CD8-positive, alpha-beta memory T cell (primary cell): ENCODE measurements at regions of chr6 and their contacts with region 1.

Region 1: DNA sequence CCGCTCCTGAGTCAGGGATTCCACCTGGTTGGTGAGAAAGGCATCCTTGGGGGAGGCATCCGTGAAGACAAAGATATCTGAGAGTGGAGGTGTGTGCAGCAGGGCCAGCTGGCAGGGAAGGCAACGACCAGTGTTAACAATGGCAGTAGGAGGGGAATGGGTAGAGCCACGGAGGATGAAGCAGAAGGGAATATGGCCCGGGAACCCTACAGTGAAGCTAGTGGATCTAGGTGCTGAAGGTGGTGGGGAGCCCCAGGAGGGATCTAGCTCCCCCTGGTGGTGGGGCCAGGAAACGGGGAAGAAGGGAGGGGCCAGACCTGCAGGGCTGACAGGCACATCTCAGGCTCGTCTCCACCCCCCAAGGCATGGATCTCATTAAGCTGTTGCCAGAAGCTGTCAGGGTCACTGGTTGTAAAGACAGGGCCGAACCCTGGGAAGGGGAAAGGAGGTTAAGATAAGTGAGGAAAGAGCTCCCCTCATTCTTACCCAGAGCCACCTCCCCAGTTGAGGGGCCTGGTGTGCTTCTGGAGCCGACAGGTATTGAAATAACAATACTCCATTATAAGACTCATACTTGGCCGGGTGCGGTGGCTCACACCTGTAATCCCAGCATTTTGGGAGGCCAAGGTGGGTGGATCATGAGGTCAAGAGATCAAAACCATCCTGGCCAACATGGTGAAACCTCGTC is 7.3 kb downstream of the VWA7 start:
- DNase-seq: peak; percentile 69 to 85 (median 74)
- H3K4me3 ChIP-seq: no peak overlapping the region
- H3K4me3 Mint-ChIP-seq: peak overlapping the region in 1 of 7 donors; percentile 63
- H3K27ac ChIP-seq: no peak overlapping the region
- H3K27ac Mint-ChIP-seq: peak overlapping the region in 6 of 8 donors; percentile 4 to 82 (median 67)
- H3K4me1 ChIP-seq: peaks cover 33% of the 10 kb centered on the region
- H3K4me1 Mint-ChIP-seq: peaks cover 22 to 29% (median 27%) of the 10 kb centered on the region in 3 donors
- H3K27me3 ChIP-seq: no peaks in the 10 kb centered on the region
- H3K27me3 Mint-ChIP-seq: no peaks in the 10 kb centered on the region

Region 2: DNA sequence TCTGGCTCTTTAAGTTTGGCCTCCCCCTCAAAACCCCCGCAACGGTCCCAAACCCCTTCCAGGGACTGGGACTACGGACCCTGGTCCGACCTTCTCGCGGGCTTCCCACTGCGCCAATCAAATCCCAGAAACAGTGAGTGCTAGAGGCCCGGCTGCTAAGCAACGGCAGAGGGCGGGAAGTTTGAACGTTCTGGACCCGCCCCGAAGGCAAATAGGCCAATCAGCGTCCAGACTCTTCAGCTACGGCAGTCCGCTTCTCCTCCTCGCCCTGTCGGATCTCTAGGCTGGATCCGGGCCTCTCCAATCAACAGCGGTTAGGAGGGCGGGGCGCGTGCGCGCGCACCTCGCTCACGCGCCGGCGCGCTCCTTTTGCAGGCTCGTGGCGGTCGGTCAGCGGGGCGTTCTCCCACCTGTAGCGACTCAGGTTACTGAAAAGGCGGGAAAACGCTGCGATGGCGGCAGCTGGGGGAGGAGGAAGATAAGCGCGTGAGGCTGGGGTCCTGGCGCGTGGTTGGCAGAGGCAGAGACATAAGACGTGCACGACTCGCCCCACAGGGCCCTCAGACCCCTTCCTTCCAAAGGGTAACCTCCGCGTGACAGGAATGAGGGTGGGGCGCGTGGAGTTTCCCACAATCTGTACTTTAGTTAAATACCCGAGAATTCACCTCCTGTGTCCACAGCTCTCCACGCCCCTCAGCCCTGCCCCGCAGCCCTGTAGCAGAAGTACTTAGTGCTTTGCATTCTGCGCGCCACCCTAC is 30.0 kb before region 1 on chr6 and contains the start of gene MSH5:
- CTCF ChIA-PET with region 1: interaction called, 42 read pairs
- POLR2A ChIA-PET with region 1: interaction called, 12 read pairs
- DNase-seq: peak; percentile 91 to 97 (median 93)
- H3K4me3 ChIP-seq: peak within 1 kb of the TSS; percentile 84
- H3K4me3 Mint-ChIP-seq: peak within 1 kb of the TSS; percentile 93 to 99 (median 98)
- H3K27ac ChIP-seq: peak within 1 kb of the TSS; percentile 98
- H3K27ac Mint-ChIP-seq: peak within 1 kb of the TSS; percentile 91 to 99 (median 96)
- H3K4me1 ChIP-seq: peaks cover 40% of the 10 kb centered on the region
- H3K4me1 Mint-ChIP-seq: peaks cover 46 to 62% (median 55%) of the 10 kb centered on the region in 3 donors
- H3K27me3 ChIP-seq: no peaks in the 10 kb centered on the region
- H3K27me3 Mint-ChIP-seq: no peaks in the 10 kb centered on the region
- total RNA-seq, gene MSH5: 36.4 to 39.8 TPM

Region 3: GRCh38 chr6:31780507-31781243 is 10.8 kb after region 1 on chr6:
- CTCF ChIA-PET with region 1: interaction called, 10 read pairs
- POLR2A ChIA-PET with region 1: interaction called, 3 read pairs
- DNase-seq: peak in 1 of 5 donors; percentile 37
- H3K4me3 ChIP-seq: no peak overlapping the region
- H3K4me3 Mint-ChIP-seq: no peak overlapping the region
- H3K27ac ChIP-seq: no peak overlapping the region
- H3K27ac Mint-ChIP-seq: peak overlapping the region in 1 of 8 donors; percentile 31
- H3K4me1 ChIP-seq: peaks cover 20% of the 10 kb centered on the region
- H3K4me1 Mint-ChIP-seq: peaks cover 15 to 21% (median 17%) of the 10 kb centered on the region in 3 donors
- H3K27me3 ChIP-seq: no peaks in the 10 kb centered on the region
- H3K27me3 Mint-ChIP-seq: no peaks in the 10 kb centered on the region

Region 4: DNA sequence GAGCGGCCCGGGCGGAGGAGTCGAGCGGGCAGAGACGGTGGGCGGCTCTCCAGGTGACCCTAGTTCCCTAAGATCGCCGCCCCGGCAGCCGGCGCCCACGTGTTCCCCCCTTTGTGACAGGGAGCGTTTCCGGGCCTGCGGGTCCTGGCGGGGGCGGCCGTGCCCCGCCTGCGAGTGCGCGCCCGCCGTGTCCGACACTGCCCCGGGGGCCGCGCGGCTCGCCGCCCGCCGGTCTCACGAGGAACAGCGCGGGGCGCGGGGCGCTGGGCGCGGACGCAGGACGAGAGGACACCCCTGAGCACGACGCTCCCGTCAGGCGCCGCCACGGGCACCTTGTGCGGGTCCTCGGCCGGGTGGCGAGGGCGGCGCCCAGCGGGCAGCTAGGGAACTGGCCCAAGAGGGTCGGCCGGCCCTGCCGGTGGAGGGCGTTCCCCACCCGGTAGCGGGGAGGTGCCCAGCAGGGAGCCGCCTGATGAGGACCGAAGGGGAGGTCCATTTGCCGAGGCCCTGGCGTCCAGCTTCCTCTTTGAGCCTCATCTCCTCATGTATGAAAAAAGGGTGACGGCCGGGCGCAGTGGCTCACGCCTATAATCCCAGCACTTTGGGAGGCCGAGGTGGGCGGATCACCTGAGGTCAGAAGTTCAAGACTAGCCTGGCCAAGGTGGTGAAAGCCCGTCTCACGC is 25.9 kb after region 1 on chr6 and contains the start of gene VARS1:
- CTCF ChIA-PET with region 1: interaction called, 13 read pairs
- POLR2A ChIA-PET with region 1: no interaction called
- DNase-seq: peak; percentile 77 to 90 (median 84)
- H3K4me3 ChIP-seq: peak within 1 kb of the TSS; percentile 82
- H3K4me3 Mint-ChIP-seq: peak within 1 kb of the TSS; percentile 89 to 99 (median 94)
- H3K27ac ChIP-seq: peak within 1 kb of the TSS; percentile 87
- H3K27ac Mint-ChIP-seq: peak within 1 kb of the TSS; percentile 85 to 99 (median 98)
- H3K4me1 ChIP-seq: peaks cover 46% of the 10 kb centered on the region
- H3K4me1 Mint-ChIP-seq: peaks cover 34 to 59% (median 40%) of the 10 kb centered on the region in 3 donors
- H3K27me3 ChIP-seq: no peaks in the 10 kb centered on the region
- H3K27me3 Mint-ChIP-seq: no peaks in the 10 kb centered on the region
- total RNA-seq, gene VARS1: 179 to 180 TPM

Region 5: DNA sequence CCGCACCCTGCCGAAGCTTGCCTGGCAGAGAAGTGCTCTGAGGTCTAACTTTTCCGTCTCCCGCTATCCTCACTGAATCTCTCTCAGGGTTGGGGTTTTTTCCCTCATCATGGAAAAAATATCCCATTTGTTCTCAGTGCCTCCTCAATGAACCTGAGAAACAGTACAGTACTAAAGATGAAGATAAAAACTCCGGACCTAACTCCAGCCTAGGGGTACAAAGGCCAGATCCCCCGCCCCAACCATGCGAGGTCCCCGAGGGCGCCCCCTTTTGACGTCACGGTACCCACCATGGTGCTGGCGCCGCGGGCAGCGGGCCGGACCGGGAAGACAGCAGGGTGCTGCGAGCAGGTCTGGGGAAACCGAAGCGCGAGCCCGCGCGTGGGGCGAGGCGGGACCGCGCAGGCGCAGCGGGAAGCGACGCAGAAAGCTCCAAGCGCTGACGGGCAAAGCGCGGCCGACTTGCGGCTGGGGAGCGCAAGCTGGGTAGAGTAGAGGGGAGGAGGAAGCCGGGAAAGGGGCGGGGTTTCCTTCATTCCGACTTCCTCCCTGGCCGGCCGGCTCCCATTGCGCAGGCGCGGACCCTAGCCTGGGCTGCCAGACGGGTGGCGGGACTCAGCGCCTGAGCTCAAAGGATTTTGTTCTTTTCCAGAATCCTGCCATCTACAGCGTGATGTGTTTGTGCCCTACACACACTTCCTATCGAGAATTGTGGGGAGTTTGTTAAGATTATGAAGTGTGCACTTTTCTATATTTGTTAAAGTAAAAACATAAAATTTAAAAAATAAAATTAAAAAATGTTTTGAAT is 36.8 kb after region 1 on chr6 and contains the start of gene LSM2:
- CTCF ChIA-PET with region 1: interaction called, 12 read pairs
- POLR2A ChIA-PET with region 1: no interaction called
- DNase-seq: peak; percentile 95 to 98 (median 97)
- H3K4me3 ChIP-seq: peak within 1 kb of the TSS; percentile 95
- H3K4me3 Mint-ChIP-seq: peak within 1 kb of the TSS; percentile 83 to 94 (median 91)
- H3K27ac ChIP-seq: peak within 1 kb of the TSS; percentile 93
- H3K27ac Mint-ChIP-seq: peak within 1 kb of the TSS; percentile 85 to 97 (median 94)
- H3K4me1 ChIP-seq: peaks cover 12% of the 10 kb centered on the region
- H3K4me1 Mint-ChIP-seq: peaks cover 17 to 45% (median 28%) of the 10 kb centered on the region in 3 donors
- H3K27me3 ChIP-seq: no peaks in the 10 kb centered on the region
- H3K27me3 Mint-ChIP-seq: no peaks in the 10 kb centered on the region
- total RNA-seq, gene LSM2: 160 to 172 TPM

Region 6: DNA sequence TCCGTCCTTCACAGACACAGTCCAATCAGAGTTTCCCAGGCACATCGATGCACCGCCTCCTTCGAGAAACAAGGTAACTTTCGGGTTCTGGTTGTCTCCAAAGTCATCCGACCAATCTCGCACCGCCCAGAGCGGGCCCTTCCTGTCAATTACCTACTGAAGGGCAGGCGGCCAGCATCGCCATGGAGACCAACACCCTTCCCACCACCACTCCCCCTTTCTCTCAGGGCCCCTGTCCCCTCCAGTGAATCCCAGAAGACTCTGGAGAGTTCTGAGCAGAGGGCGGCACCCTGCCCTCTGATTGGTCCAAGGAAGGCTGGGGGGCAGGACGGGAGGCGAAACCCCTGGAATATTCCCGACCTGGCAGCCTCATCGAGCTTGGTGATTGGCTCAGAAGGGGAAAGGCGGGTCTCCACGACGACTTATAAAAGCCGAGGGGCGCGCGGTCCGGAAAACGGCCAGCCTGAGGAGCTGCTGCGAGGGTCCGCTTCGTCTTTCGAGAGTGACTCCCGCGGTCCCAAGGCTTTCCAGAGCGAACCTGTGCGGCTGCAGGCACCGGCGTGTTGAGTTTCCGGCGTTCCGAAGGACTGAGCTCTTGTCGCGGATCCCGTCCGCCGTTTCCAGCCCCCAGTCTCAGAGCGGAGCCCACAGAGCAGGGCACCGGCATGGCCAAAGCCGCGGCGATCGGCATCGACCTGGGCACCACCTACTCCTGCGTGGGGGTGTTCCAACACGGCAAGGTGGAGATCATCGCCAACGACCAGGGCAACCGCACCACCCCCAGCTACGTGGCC is 57.7 kb after region 1 on chr6 and contains the start of gene HSPA1B:
- CTCF ChIA-PET with region 1: interaction called, 10 read pairs
- POLR2A ChIA-PET with region 1: interaction called, 4 read pairs
- DNase-seq: peak; percentile 69 to 92 (median 81)
- H3K4me3 ChIP-seq: peak within 1 kb of the TSS; percentile 71
- H3K4me3 Mint-ChIP-seq: peak within 1 kb of the TSS; percentile 87 to 99 (median 96)
- H3K27ac ChIP-seq: peak within 1 kb of the TSS; percentile 89
- H3K27ac Mint-ChIP-seq: peak within 1 kb of the TSS; percentile 94 to 99 (median 96)
- H3K4me1 ChIP-seq: peaks cover 27% of the 10 kb centered on the region
- H3K4me1 Mint-ChIP-seq: peaks cover 41 to 54% (median 43%) of the 10 kb centered on the region in 3 donors
- H3K27me3 ChIP-seq: no peaks in the 10 kb centered on the region
- H3K27me3 Mint-ChIP-seq: peaks cover 0 to 4% of the 10 kb centered on the region in 2 donors
- total RNA-seq, gene HSPA1B: 80.9 to 81.4 TPM

Region 7: GRCh38 chr6:33454009-33454946 is 1684.5 kb after region 1 on chr6 and contains the start of gene ZBTB9:
- CTCF ChIA-PET with region 1: no interaction called
- POLR2A ChIA-PET with region 1: no interaction called
- DNase-seq: peak; percentile 92 to 97 (median 92)
- H3K4me3 ChIP-seq: peak within 1 kb of the TSS; percentile 84
- H3K4me3 Mint-ChIP-seq: peak within 1 kb of the TSS; percentile 90 to 99 (median 97)
- H3K27ac ChIP-seq: peak within 1 kb of the TSS; percentile 84
- H3K27ac Mint-ChIP-seq: peak within 1 kb of the TSS; percentile 89 to 98 (median 94)
- H3K4me1 ChIP-seq: peaks cover 21% of the 10 kb centered on the region
- H3K4me1 Mint-ChIP-seq: peaks cover 36 to 50% (median 43%) of the 10 kb centered on the region in 3 donors
- H3K27me3 ChIP-seq: no peaks in the 10 kb centered on the region
- H3K27me3 Mint-ChIP-seq: no peaks in the 10 kb centered on the region
- total RNA-seq, gene ZBTB9: 16.4 to 16.5 TPM